Activated B cell treated with CpG ODN at 0.5 μM for 24 hours (primary cell): ENCODE measurements at regions of chr22 and their contacts with region 1.

Region 1: DNA sequence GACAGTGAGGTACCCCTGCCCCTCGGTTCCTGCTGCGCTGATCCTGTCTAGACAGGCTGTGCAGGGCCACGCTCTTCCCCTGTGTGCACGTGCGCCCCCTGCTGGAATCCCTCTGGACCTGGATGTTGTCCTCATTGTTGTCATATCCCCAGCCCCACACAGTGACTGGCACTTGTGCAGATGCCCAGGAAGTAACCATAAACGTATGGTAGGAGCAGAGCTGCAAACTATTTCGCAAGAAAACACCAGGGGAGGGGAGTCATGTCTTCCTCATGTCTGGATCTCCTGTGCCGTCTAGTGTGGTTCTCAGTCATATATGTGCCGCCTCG is 114.7 kb downstream of the CRYBB2 start:
- DNase-seq: peak; percentile 39
- ATAC-seq: peak; percentile 47
- H3K4me3 Mint-ChIP-seq: no peak overlapping the region
- H3K27ac Mint-ChIP-seq: no peak overlapping the region
- H3K4me1 Mint-ChIP-seq: no peaks in the 10 kb centered on the region
- H3K27me3 Mint-ChIP-seq: no peaks in the 10 kb centered on the region
- CTCF ChIP-seq: no peak

Region 2: GRCh38 chr22:25282671-25283561 is 51.2 kb before region 1 on chr22:
- CTCF ChIA-PET with region 1: no interaction called
- POLR2A ChIA-PET with region 1: no interaction called
- intact Hi-C with region 1: loop called (anchors 5 kb)
- DNase-seq: peak; percentile 18
- ATAC-seq: peak; percentile 58
- H3K4me3 Mint-ChIP-seq: peak overlapping the region; percentile 84
- H3K27ac Mint-ChIP-seq: peak overlapping the region; percentile 68
- H3K4me1 Mint-ChIP-seq: peaks cover 46% of the 10 kb centered on the region
- H3K27me3 Mint-ChIP-seq: peaks cover 36% of the 10 kb centered on the region
- CTCF ChIP-seq: no peak

Region 3: GRCh38 chr22:25351631-25352293 is 17.6 kb after region 1 on chr22:
- CTCF ChIA-PET with region 1: no interaction called
- POLR2A ChIA-PET with region 1: no interaction called
- intact Hi-C with region 1: no loop called
- DNase-seq: peak; percentile 9
- ATAC-seq: no peak
- H3K4me3 Mint-ChIP-seq: no peak overlapping the region
- H3K27ac Mint-ChIP-seq: no peak overlapping the region
- H3K4me1 Mint-ChIP-seq: no peaks in the 10 kb centered on the region
- H3K27me3 Mint-ChIP-seq: no peaks in the 10 kb centered on the region
- CTCF ChIP-seq: no peak

Region 4: GRCh38 chr22:25368271-25368670 is 34.1 kb after region 1 on chr22:
- CTCF ChIA-PET with region 1: no interaction called
- POLR2A ChIA-PET with region 1: no interaction called
- intact Hi-C with region 1: no loop called
- DNase-seq: no peak
- ATAC-seq: no peak
- H3K4me3 Mint-ChIP-seq: no peak overlapping the region
- H3K27ac Mint-ChIP-seq: no peak overlapping the region
- H3K4me1 Mint-ChIP-seq: peaks cover 6% of the 10 kb centered on the region
- H3K27me3 Mint-ChIP-seq: no peaks in the 10 kb centered on the region
- CTCF ChIP-seq: no peak